Uterus (tissue), 4 donors: ENCODE measurements at regions of chr13 and their contacts with region 1.

Region 1: GRCh38 chr13:111165241-111166010 is 50.3 kb downstream of the ARHGEF7 start:
- DNase-seq: no peak
- H3K4me3 ChIP-seq: no peak overlapping the region
- H3K27ac ChIP-seq: no peak overlapping the region
- H3K4me1 ChIP-seq: no peaks in the 10 kb centered on the region
- H3K27me3 ChIP-seq: no peaks in the 10 kb centered on the region
- CTCF ChIP-seq: no peak
- POLR2A ChIP-seq: no peak

Region 2: GRCh38 chr13:111216166-111216960 is 50.9 kb after region 1 on chr13:
- intact Hi-C with region 1: loop called (anchors 10 kb)
- DNase-seq: no peak
- H3K4me3 ChIP-seq: no peak overlapping the region
- H3K27ac ChIP-seq: peak overlapping the region; percentile 18 to 38
- H3K4me1 ChIP-seq: no peaks in the 10 kb centered on the region
- H3K27me3 ChIP-seq: no peaks in the 10 kb centered on the region
- CTCF ChIP-seq: peak; percentile 19 to 44 (median 40)
- POLR2A ChIP-seq: no peak